Cardiac septum (tissue), 1 donor: ENCODE measurements at regions of chr3 and their contacts with region 1.

Region 1: DNA sequence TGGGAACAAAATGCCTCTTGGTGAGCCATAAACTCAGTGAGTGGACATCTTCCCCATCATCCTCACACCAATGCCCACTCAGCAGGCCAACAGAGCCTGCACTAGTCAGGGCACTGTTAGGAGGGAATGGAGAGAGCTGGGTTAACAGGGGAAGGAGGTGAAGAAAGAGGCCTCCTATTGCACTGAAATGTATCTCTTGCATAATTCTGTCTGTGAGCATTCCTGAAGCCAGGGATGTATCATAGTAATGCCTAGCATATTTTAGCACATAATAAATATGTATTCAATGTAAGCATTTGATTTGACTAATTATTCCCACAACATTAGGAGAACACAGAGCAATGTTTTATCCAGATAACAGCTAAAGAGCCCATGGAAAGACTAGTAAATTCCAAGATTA is 81.2 kb downstream of the ANO10 start:
- DNase-seq: no peak

Region 2: GRCh38 chr3:43405888-43406642 is 134.6 kb before region 1 on chr3:
- intact Hi-C with region 1: no loop called
- DNase-seq: no peak

Region 3: DNA sequence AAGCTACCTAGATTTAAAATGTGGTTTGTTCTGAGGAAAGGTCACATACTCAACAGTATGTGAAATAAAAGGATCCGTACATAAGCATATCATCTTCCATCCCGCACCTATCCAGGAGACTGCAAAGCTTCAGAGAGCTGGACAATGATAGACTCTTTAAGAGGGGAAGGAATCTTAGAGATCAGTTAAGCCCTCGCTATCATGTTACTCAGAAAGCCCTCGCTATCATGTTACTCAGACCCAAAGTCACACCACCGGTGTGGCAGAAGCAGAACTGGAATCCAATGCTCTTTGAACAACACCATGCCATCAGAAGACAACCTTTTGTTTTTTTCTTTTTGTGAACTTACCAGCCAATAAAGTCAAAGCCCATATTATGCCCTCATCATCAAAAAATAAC is 75.4 kb after region 1 on chr3:
- intact Hi-C with region 1: no loop called
- DNase-seq: no peak

Region 4: GRCh38 chr3:43759297-43759782 is 218.7 kb after region 1 on chr3:
- intact Hi-C with region 1: loop called (anchors 10 kb)
- DNase-seq: no peak

Region 5: GRCh38 chr3:44198284-44199269 is 658.0 kb after region 1 on chr3:
- intact Hi-C with region 1: loop called (anchors 2 kb)
- DNase-seq: no peak